GM12878 (cell line): ENCODE measurements at regions of chr4 and their contacts with region 1.

Region 1: DNA sequence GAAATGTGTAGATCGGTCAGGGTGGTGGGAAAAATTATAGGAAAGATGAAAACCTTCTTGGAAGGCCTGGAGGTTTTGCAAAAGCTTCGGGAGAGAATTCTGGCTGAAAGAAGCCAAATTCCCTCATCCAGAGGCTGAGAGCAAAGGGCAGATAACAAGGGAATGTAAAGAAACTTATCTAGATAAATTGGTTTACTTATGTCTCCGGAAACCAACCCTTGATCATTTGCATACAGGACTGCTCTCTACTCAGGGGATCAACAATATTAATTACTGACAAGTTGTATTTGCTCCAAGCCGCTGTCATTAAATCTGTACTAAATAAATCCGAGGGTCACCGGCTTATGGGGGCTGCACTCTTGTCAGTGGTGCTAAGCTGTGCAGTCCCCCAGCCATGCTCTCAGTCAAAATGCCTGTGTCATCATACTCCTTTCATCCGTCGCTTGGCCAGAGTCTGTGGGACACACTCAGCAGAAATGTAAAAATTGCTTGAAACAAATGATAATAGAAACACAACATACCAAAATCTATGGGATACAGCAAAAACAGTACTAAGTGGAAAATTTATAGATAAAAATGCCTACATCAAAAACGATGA is 715.7 kb downstream of the KCTD8 start:
- DNase-seq: no peak
- ATAC-seq: no peak
- H3K4me3 ChIP-seq: no peak overlapping the region
- H3K27ac ChIP-seq: no peak overlapping the region
- H3K4me1 ChIP-seq: no peaks in the 10 kb centered on the region
- H3K27me3 ChIP-seq: no peaks in the 10 kb centered on the region
- CTCF ChIP-seq: no peak
- EP300 ChIP-seq: no peak
- POLR2A ChIP-seq: no peak
- RAD21 ChIP-seq: no peak

Region 2: GRCh38 chr4:42703813-42704212 is 1029.1 kb before region 1 on chr4:
- CTCF ChIA-PET with region 1: no interaction called
- POLR2A ChIA-PET with region 1: no interaction called
- RAD21 ChIA-PET with region 1: no interaction called
- SMC1A ChIA-PET with region 1: no interaction called
- in situ Hi-C with region 1: no loop called
- intact Hi-C with region 1: no loop called
- DNase-seq: no peak
- ATAC-seq: peak; percentile 33
- H3K4me3 ChIP-seq: no peak overlapping the region
- H3K27ac ChIP-seq: no peak overlapping the region
- H3K4me1 ChIP-seq: no peaks in the 10 kb centered on the region
- H3K27me3 ChIP-seq: no peaks in the 10 kb centered on the region
- CTCF ChIP-seq: no peak
- EP300 ChIP-seq: no peak
- POLR2A ChIP-seq: no peak
- RAD21 ChIP-seq: no peak

Region 3: DNA sequence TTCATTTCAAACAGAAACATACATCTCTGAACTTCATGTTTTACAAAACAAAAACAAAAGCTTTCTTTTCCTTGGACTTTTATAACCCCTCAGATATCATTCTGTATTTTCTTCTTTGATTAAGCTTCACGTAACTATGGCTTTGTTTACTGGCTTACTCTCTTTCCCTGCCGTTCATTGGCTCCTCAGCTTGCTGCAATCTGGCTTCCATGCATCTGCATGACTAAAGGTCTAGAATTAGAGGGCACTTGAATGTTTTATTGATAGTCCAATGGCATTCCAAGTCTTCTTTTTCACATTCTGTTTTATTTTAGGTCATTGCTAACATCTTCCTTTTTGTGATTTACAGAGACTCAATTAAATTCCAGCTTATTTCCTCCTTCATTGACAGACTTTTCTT is 352.8 kb before region 1 on chr4:
- CTCF ChIA-PET with region 1: no interaction called
- POLR2A ChIA-PET with region 1: no interaction called
- RAD21 ChIA-PET with region 1: no interaction called
- SMC1A ChIA-PET with region 1: no interaction called
- in situ Hi-C with region 1: no loop called
- intact Hi-C with region 1: loop called (anchors 5 kb)
- DNase-seq: no peak
- ATAC-seq: no peak
- H3K4me3 ChIP-seq: no peak overlapping the region
- H3K27ac ChIP-seq: no peak overlapping the region
- H3K4me1 ChIP-seq: no peaks in the 10 kb centered on the region
- H3K27me3 ChIP-seq: no peaks in the 10 kb centered on the region
- CTCF ChIP-seq: no peak
- EP300 ChIP-seq: no peak
- POLR2A ChIP-seq: no peak
- RAD21 ChIP-seq: no peak